ENCODE measurements at regions of chr15 and their contacts with region 1.

Region 1: GRCh38 chr15:31488426-31489204 is 162.0 kb downstream of the KLF13 start:
- DNase-seq: no peak
- H3K4me3 ChIP-seq: no peak overlapping the region
- H3K27ac ChIP-seq: peak overlapping the region; percentile 55 to 80 (median 63)
- H3K4me1 ChIP-seq: peaks cover 24 to 57% (median 29%) of the 10 kb centered on the region in 3 donors
- H3K27me3 ChIP-seq: peaks cover 0 to 8% (median 0%) of the 10 kb centered on the region in 4 donors
- CTCF ChIP-seq: peak; percentile 86 to 98 (median 96)
- POLR2A ChIP-seq: no peak

Region 2: GRCh38 chr15:31200735-31201151 is 287.9 kb before region 1 on chr15:
- intact Hi-C with region 1: loop called (anchors 5 kb)
- DNase-seq: no peak
- H3K4me3 ChIP-seq: no peak overlapping the region
- H3K27ac ChIP-seq: no peak overlapping the region
- H3K4me1 ChIP-seq: peaks cover 4 to 28% (median 7%) of the 10 kb centered on the region in 3 donors
- H3K27me3 ChIP-seq: peaks cover 0 to 8% (median 0%) of the 10 kb centered on the region in 4 donors
- CTCF ChIP-seq: peak; percentile 30 to 75 (median 64)
- POLR2A ChIP-seq: no peak

Region 3: GRCh38 chr15:31338879-31339557 is 149.6 kb before region 1 on chr15:
- intact Hi-C with region 1: loop called (anchors 10 kb)
- DNase-seq: no peak
- H3K4me3 ChIP-seq: peak overlapping the region in 2 of 4 donors; percentile 2 to 22
- H3K27ac ChIP-seq: peak overlapping the region; percentile 64 to 84 (median 77)
- H3K4me1 ChIP-seq: peaks cover 79 to 100% (median 85%) of the 10 kb centered on the region in 3 donors
- H3K27me3 ChIP-seq: no peaks in the 10 kb centered on the region
- CTCF ChIP-seq: no peak
- POLR2A ChIP-seq: no peak

Region 4: GRCh38 chr15:31365655-31366127 is 122.9 kb before region 1 on chr15:
- intact Hi-C with region 1: loop called (anchors 10 kb)
- DNase-seq: peak; percentile 83
- H3K4me3 ChIP-seq: peak overlapping the region in 3 of 4 donors; percentile 39 to 62 (median 41)
- H3K27ac ChIP-seq: peak overlapping the region; percentile 83 to 95 (median 90)
- H3K4me1 ChIP-seq: peaks cover 59 to 99% (median 84%) of the 10 kb centered on the region in 3 donors
- H3K27me3 ChIP-seq: no peaks in the 10 kb centered on the region
- CTCF ChIP-seq: peak in 4 of 6 experiments; percentile 29 to 47 (median 42)
- POLR2A ChIP-seq: peak in 1 of 4 donors; percentile 58

Region 5: DNA sequence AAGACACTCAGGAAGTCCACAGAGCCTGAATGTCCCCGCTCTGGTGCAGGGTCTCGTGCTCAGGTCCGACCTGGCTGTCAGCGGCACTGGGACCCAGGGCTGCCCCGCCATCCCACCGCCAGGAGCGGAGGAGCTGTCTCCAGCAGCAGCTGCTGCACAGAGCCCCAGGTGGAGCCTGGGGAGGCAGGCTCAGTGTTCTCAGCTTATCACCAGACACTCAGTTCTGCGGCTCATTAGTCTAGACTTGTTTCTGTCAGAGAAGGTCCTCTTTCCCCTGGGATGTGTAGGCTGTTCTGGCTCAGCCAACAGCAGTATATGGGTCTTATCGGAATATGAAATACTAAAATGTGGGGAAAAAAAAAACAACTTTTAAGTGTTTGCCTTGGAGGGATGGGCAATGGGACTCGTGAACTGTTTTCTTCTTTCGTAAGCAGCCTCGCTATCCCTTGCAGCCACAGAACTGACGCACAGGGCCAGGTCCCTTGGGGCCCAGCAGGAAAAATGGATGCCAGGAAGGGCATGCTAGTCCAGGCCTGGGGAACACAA is 86.0 kb before region 1 on chr15:
- intact Hi-C with region 1: loop called (anchors 10 kb)
- DNase-seq: no peak
- H3K4me3 ChIP-seq: no peak overlapping the region
- H3K27ac ChIP-seq: peak overlapping the region; percentile 11 to 59 (median 28)
- H3K4me1 ChIP-seq: peaks cover 21 to 39% (median 38%) of the 10 kb centered on the region in 3 donors
- H3K27me3 ChIP-seq: no peaks in the 10 kb centered on the region
- CTCF ChIP-seq: no peak
- POLR2A ChIP-seq: no peak

Region 6: DNA sequence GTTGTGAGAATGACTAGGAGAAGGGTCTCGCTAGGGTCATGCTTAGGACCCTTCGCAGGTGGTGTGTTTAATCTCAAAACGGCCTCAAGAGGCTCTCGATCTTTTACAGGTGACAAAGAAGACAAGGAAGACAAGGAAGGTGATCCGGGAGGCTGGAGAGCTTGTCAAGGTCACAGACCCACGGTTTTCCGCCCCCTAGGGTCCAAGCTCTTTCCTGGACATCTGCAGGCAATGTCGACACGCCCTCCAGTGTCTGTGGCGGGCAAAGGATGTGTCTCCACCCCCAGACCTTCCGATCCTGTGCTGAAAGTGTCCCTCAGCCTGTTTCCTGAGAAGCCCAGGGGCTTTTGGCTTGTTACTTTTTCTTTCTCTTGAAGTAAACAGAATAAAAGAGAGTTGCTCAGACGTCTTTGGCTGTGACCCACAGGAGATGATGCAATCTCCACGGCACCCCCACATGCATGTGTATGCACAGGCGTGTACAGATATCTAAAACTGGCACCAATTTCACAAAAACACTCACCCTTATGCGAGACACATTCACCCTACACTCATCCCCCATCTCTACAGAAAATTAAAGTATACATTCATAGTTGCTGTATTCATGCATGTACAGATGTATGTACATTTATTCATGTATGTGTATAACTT is 53.2 kb before region 1 on chr15:
- intact Hi-C with region 1: loop called (anchors 10 kb)
- DNase-seq: peak; percentile 46
- H3K4me3 ChIP-seq: peak overlapping the region in 3 of 4 donors; percentile 13 to 54 (median 22)
- H3K27ac ChIP-seq: peak overlapping the region; percentile 81 to 96 (median 84)
- H3K4me1 ChIP-seq: peaks cover 21 to 47% (median 40%) of the 10 kb centered on the region in 3 donors
- H3K27me3 ChIP-seq: no peaks in the 10 kb centered on the region
- CTCF ChIP-seq: peak in 5 of 6 experiments; percentile 54 to 78 (median 62)
- POLR2A ChIP-seq: no peak

Measured in esophagus squamous epithelium (tissue), 5 donors.